ENCODE measurements at regions of chr6 and their contacts with region 1.

Region 1: GRCh38 chr6:169831450-169832246 is 80.2 kb downstream of the ERMARD start:
- DNase-seq: peak; percentile 72
- H3K4me3 ChIP-seq: no peak overlapping the region
- H3K27ac ChIP-seq: no peak overlapping the region
- H3K4me1 ChIP-seq: peaks cover 8% of the 10 kb centered on the region
- H3K27me3 ChIP-seq: peaks cover 26% of the 10 kb centered on the region
- CTCF ChIP-seq: peak; percentile 94

Region 2: DNA sequence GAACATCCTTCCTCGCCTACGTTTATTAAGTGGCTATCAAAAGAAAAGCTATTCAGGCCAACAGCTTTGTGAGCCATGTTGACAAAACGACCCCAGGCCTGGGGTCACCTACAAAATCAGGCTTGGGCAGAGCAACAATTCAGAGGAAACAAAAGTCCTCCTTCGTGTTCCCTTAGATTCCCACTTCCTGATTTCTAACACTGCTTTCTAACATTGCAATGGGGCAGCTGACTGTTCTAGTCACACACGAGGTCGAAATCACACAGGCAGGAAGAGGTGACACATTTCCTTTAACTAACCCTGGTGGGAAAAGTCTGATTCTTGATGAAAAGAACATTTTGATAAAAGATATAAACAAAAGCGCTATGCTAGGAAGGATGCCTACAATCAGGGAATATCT is 161.8 kb before region 1 on chr6:
- intact Hi-C with region 1: no loop called
- DNase-seq: no peak
- H3K4me3 ChIP-seq: no peak overlapping the region
- H3K27ac ChIP-seq: peak overlapping the region; percentile 67
- H3K4me1 ChIP-seq: peaks cover 16% of the 10 kb centered on the region
- H3K27me3 ChIP-seq: no peaks in the 10 kb centered on the region
- CTCF ChIP-seq: no peak

Region 3: DNA sequence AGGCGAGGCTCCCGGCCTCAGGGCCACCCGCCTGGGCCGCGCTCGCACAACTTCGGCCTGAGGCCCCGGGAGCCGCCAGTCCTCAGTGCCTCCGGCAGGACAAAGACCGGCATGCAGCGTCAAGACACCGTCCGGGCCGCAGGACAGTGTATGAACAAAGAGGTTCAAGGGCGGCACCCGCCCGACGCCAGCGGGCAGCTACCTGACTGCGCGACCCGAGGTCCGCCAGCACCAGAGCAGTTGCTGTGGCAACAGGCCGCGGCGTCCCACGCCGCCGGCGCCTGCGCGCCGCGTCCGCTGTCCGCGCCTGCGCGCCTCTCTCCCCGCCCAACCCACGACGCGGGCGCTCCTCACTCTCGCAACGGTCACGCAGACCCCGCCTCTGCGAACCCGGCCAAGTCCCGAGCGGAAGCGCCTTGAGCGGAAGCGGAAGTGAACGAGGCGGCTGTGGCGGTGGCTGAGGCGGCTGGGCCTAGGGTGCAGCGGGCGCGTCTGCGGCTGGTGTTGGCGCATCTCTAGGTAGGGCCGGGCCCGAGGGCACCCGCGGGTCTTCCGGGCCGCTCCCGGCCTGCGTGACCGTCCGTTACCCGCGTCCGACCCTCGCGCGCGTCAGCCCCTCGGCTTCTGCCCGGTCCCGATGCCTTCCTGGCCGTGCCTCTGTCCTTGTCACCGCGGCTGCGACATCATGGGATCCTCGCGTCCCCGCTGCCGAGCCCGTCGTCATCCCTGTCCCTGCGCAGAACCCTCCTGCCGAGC is 474.9 kb after region 1 on chr6 and contains the start of gene FAM120B:
- intact Hi-C with region 1: loop called (anchors 10 kb)
- DNase-seq: peak; percentile 97
- H3K4me3 ChIP-seq: peak within 1 kb of the TSS; percentile 98
- H3K27ac ChIP-seq: peak within 1 kb of the TSS; percentile 94
- H3K4me1 ChIP-seq: peaks cover 66% of the 10 kb centered on the region
- H3K27me3 ChIP-seq: no peaks in the 10 kb centered on the region
- CTCF ChIP-seq: no peak
- total RNA-seq, gene FAM120B: 20.1 TPM

Region 4: DNA sequence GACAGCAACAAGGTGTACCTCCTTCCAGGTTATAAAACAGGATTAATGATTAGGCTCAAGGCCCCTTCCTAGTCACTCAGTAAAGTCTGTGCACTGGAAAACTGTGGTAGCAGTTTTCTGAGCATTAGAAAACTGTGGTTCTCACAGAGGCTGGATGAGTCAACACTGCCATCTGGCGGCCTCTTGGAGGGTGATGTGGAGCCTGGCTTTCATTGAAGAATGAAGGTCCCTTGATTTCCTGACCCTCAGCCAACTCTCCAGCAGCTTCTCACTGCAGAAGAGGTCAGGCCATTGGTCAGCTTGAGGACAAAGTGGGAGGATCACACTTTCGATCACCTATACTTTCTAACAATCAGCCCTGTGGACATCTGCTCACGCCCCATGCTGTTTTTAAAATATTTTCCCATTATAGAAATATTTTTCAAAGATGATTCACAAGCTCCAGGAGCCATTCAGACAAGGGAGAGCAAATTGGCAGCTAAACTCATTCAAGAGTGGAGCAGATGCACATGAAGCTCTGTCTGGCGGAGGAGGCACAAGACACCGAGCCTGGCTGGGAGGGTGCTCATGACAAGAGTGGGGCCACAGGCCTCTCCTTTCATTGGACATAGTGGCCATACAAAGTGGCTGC is 698.3 kb after region 1 on chr6:
- intact Hi-C with region 1: loop called (anchors 5 kb)
- DNase-seq: peak; percentile 70
- H3K4me3 ChIP-seq: no peak overlapping the region
- H3K27ac ChIP-seq: no peak overlapping the region
- H3K4me1 ChIP-seq: peaks cover 4% of the 10 kb centered on the region
- H3K27me3 ChIP-seq: no peaks in the 10 kb centered on the region
- CTCF ChIP-seq: peak; percentile 94